HEK293T (cell line): ENCODE measurements at regions of chr1 and their contacts with region 1.

Region 1: DNA sequence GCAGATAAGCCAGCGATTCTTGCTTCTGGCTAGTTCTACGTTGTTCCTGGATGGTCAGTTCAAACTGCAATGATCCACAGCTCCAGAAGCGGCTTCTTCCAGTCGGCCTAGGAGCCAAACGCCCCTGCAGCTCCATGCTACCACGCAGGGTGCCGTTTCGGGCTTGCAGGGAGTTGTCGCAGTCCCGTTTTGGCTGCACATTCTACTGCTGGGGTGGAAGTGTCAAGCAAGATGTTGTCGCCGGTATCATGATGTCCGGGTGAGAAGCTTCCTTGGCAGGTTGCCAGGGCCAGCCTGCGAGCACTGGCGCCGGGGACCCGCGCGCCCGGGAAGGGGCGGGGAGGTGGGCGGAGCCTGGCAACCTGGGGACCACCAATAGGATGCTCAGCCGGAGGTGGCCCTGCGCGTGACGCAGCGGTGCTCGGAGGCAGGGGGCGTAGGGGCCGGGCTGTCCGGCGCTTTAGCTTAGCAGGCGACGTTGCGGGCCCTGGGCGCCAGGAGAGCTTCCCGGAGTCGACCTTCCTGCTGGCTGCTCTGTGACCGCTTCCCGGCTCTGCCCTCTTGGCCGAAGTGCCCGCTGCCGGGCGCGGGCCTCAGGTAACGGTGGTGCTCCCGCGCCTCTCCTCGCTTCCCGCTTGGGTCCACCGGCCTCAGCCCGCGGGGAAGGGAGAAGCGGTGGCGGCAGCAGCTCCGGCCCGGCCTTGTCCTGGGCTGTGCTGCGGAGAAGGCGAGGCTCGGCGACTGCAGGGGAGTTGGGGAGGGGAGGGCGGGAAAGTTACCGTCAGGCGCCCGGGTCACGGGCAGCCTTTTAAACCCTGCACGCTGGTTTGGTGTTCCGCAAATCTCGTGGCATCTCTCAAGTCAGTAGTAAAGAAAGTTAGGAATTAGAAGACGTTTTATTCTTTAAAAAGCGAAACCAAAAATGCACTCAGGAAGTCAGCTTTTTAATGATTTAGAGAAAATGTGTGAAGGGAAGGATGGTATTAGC is at the start of gene SOAT1:
- DNase-seq: peak; percentile 98

Region 2: GRCh38 chr1:179365320-179366092 is 71.9 kb after region 1 on chr1 and contains the start of gene AXDND1:
- CTCF ChIA-PET with region 1: interaction called, 5 read pairs
- POLR2A ChIA-PET with region 1: interaction called, 12 read pairs
- DNase-seq: peak; percentile 86